ENCODE measurements at regions of chr11 and their contacts with region 1.

Region 1: DNA sequence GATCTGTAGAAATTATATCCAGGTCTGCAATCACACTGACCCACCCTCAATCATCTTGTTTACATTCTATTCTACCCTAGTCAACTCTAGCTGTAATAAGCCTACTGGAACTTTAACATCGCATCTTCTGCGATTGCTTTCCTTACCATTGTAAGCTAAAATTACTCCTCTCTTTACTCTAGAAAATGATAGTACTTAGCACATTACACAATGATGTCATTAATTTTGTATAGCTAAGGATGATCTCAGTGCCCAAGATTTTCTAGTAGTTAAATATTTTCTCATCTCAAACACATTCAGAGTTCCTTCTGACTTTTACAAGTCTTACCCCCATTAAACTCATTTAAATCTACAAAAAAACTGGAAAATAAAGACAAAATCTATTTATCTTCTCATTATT is 39.6 kb upstream of the CTSC start:
- DNase-seq: no peak
- H3K27ac ChIP-seq: no peak overlapping the region
- CTCF ChIP-seq: no peak

Region 2: DNA sequence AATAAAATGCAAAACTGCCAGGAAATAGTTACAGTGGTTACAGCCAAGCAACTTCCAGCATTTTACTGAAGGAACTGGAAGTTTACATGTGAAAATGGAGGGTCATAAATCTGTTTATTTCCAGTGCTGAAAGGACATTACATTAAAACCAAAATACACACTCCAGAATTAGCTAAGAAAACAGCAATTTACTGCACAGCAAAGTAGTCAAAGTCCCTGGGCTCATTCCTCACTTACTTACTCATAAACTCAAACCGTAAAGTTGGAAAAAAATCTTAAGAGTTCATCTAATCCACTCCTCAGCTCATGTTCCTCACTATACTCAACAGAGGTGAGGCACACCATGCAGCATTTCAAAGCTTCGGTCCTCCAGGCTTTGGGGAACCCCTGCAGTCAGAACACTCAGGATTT is 57.0 kb before region 1 on chr11:
- CTCF ChIA-PET with region 1: no interaction called
- POLR2A ChIA-PET with region 1: no interaction called
- DNase-seq: no peak
- H3K27ac ChIP-seq: no peak overlapping the region
- CTCF ChIP-seq: no peak

Region 3: DNA sequence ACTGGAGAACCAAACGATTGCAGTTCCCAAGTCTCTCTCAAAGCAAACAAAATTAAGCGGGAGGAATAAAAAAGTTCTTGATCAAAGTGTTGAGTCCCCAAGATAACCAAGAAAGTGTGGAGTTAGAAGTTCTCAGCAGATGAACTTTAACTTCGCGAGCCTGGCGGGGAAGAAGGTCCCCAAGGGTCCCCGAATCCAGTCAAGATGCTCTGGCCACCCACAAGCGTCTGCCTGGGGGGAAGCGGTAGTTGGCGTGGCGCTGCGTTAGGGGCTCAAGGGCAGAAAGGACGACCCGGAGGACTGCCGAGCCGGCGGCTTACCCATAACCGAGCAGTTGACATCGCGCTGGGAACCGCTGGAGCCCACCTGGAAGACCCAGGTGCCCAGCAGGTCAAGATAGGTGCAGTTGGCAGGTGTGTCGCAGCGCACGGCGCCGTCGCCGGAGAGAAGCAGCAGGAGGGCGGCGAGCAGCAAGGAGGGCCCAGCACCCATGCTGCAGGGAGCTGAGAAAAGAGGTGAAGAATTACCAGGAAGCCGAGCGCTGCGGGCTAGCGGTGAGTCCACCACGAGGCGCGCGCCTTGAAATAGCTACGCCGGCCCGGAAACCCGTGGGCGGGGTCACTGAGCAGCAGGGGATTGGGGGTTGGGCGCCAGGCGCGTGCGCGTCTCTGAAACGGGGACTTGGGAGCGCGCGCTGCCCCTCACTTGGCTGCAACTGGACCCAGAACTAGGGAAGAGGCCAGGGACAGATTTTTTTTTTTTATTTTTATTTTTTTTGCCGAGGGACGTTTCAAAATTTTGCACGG is 39.8 kb before region 1 on chr11 and contains the start of gene CTSC:
- CTCF ChIA-PET with region 1: interaction called, 10 read pairs
- POLR2A ChIA-PET with region 1: no interaction called
- DNase-seq: peak; percentile 89
- H3K27ac ChIP-seq: peak within 1 kb of the TSS; percentile 91
- CTCF ChIP-seq: no peak